ENCODE measurements at regions of chr2 and their contacts with region 1.

Region 1: DNA sequence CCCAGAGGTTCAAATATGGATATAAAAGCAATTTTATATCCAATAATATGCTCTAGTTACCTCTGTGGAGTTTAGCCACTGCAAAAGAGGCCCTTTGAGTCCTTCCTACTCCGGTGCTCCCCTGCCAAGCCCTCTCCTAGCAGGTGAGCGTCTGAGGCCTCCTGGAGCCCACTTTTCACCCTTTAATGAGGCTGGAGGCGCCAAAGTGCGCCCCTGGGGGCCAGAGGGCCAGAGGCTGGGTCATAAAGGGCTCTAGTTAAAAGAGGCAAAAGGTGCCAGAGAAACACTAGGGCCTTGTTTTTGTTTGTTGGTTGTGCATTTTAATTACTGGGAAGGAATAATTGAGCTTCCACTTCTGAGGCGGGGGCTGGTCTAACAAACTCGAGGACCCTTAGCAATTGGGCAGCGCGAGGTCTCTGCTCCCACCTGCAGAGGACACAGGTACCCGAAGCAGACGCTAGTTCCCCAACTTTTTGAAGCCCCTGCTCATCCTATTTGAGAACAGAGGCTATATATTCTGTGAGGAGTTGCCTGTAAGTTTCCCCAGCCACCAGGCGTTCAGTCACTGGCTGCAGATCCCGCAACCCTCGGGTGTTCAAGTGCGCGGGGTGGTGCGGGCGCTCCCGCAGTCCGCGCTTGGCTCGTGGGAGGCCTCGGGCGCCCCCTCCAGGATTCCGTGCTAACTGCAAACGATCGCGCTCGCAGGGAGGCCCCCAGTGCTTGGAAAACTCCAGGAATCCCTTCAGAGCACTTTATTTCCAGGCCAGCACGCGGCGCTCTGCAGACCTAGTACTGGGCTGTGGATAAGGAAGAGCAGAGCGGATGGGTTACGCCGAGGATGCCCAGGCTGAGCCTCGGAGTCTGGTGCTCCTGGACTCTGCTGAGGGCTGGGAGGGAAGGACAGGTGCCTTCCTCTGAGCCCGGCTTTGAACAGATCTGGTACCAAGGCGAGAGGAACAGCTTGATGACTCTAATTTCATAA is 14.1 kb downstream of the MSGN1 start:
- DNase-seq: peak; percentile 70
- H3K4me3 Mint-ChIP-seq: no peak overlapping the region
- H3K27ac Mint-ChIP-seq: no peak overlapping the region
- H3K4me1 Mint-ChIP-seq: peaks cover 6% of the 10 kb centered on the region
- H3K27me3 Mint-ChIP-seq: peaks cover 45% of the 10 kb centered on the region

Region 2: DNA sequence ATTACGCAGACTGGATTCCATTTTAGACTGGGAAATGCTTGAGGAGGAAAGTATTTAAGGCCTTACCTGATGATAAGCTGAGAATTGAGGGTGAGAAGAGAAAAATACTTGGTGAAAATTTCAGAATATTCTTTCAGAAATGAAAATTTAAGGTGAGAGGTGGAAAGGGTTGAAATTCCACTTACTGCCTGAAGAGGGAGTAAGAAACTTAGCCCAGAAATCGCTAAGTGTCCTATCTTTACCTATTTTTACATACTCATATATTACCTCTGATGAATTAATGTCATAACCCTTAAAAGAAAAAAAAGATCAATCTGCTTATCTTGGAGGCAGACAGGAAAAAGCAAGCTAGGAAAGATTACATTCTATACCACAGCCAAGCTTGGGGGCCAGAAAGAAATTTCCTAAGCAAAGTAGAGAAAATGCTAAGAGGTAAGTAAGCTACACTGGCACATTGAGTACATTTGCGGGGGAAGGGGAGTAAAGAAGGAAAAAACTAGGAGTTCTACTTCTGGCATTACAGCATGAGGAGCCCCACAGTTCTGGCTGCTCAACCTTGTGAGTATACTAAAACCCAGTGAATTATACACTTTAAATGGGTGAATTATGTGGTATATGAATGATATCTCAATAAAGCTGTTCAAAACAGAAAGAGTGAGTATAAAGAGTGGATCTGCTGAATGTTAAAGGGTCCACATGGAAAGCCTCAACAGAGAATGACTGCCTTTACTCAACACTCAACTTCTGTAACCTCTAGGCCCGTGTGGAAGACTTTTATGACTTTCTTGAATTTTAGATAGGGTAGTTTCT is 110.6 kb before region 1 on chr2:
- CTCF ChIA-PET with region 1: interaction called, 20 read pairs
- DNase-seq: no peak
- H3K4me3 Mint-ChIP-seq: no peak overlapping the region
- H3K27ac Mint-ChIP-seq: no peak overlapping the region
- H3K4me1 Mint-ChIP-seq: no peaks in the 10 kb centered on the region
- H3K27me3 Mint-ChIP-seq: no peaks in the 10 kb centered on the region